B cell (primary cell): ENCODE measurements at regions of chr6 and their contacts with region 1.

Region 1: GRCh38 chr6:11172501-11173332 is 59.8 kb downstream of the NEDD9 start:
- DNase-seq: peak; percentile 82
- ATAC-seq: peak; percentile 68
- H3K4me3 ChIP-seq: peak overlapping the region in 3 of 5 experiments; percentile 5 to 44 (median 25)
- H3K4me3 Mint-ChIP-seq: peak overlapping the region; percentile 64
- H3K27ac ChIP-seq: no peak overlapping the region
- H3K27ac Mint-ChIP-seq: no peak overlapping the region
- H3K4me1 ChIP-seq: peaks cover 7 to 9% of the 10 kb centered on the region in 2 donors
- H3K4me1 Mint-ChIP-seq: peaks cover 9% of the 10 kb centered on the region
- H3K27me3 ChIP-seq: no peaks in the 10 kb centered on the region
- H3K27me3 Mint-ChIP-seq: no peaks in the 10 kb centered on the region
- CTCF ChIP-seq: peak; percentile 90

Region 2: DNA sequence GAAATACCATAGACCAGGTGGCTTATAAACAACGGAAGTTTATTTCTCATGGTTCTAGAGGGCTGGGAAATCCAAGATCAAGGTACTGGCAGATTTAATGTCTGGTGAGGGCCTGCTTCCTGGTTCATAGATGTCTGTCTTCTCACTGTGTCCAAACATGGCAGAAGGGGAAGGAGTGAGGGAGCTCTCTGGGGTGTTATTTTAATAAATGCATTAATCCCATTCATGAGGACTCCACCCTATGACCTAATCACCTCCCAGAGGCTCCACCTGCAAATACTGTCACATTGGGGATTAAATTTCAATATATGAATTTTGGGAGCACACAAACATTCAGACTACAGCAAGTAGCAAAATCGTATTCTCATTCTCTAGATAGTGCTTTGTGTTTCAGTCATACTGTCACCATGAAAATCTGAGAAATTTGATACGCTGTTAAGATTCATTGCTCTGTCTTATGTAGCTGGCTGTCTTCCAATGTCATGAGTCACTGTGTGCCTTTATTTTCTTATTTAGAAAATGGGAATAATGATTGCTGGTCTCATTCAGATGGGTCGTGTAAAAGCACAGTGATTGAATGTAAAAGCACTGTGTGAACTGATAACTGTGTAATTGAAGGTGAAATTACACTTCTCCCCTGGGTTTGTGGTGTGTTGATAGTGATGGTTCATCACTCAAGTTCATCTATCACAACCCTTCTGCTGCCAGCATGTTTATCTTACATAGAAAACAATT is 52.3 kb before region 1 on chr6:
- CTCF ChIA-PET with region 1: no interaction called
- POLR2A ChIA-PET with region 1: no interaction called
- intact Hi-C with region 1: no loop called
- DNase-seq: no peak
- ATAC-seq: no peak
- H3K4me3 ChIP-seq: no peak overlapping the region
- H3K4me3 Mint-ChIP-seq: no peak overlapping the region
- H3K27ac ChIP-seq: no peak overlapping the region
- H3K27ac Mint-ChIP-seq: no peak overlapping the region
- H3K4me1 ChIP-seq: no peaks in the 10 kb centered on the region
- H3K4me1 Mint-ChIP-seq: peaks cover 7% of the 10 kb centered on the region
- H3K27me3 ChIP-seq: no peaks in the 10 kb centered on the region
- H3K27me3 Mint-ChIP-seq: no peaks in the 10 kb centered on the region
- CTCF ChIP-seq: no peak

Region 3: GRCh38 chr6:11144393-11144851 is 28.3 kb before region 1 on chr6:
- CTCF ChIA-PET with region 1: interaction called, 21 read pairs
- POLR2A ChIA-PET with region 1: no interaction called
- intact Hi-C with region 1: loop called (anchors 1 kb)
- DNase-seq: peak; percentile 77
- ATAC-seq: peak; percentile 80
- H3K4me3 ChIP-seq: no peak overlapping the region
- H3K4me3 Mint-ChIP-seq: no peak overlapping the region
- H3K27ac ChIP-seq: no peak overlapping the region
- H3K27ac Mint-ChIP-seq: no peak overlapping the region
- H3K4me1 ChIP-seq: peaks cover 0 to 5% of the 10 kb centered on the region in 2 donors
- H3K4me1 Mint-ChIP-seq: peaks cover 7% of the 10 kb centered on the region
- H3K27me3 ChIP-seq: no peaks in the 10 kb centered on the region
- H3K27me3 Mint-ChIP-seq: no peaks in the 10 kb centered on the region
- CTCF ChIP-seq: peak; percentile 94

Region 4: DNA sequence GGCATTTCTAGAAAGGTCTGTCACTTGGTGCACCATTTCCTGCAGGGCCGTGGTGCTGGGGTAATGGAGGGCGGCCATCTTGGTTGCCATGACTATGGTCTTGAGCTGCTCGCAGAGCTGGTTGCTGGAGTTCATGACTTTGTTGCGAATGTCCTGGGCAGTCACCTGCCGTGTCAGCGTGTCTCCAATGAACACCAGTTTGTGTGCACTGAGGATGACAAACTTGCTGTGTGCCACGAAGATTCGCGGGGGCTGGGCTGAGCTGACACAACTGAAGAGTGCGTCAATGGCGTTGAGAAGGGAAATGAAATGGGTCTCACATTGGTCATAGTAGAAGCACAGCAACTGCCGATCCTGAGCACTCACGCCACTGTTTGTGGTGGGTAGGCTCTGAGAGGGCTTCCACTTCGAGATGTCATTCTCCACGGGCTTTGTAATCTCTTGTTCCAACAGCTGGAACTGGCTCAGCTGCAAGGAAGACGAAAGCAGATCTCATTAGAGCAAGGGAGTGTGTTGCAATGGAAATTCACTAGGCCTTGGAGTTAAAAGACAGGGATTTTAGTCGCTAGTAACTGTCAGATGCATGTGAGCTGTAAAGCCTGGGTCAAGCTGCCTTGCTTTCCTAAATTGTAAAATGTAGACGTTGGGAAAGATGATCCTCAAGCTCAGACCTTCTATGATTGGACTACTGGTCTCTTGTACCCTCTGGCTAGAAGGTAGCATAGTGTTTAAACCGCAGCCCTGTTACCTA is 12.7 kb after region 1 on chr6:
- CTCF ChIA-PET with region 1: interaction called, 19 read pairs
- POLR2A ChIA-PET with region 1: no interaction called
- intact Hi-C with region 1: no loop called
- DNase-seq: no peak
- ATAC-seq: no peak
- H3K4me3 ChIP-seq: no peak overlapping the region
- H3K4me3 Mint-ChIP-seq: no peak overlapping the region
- H3K27ac ChIP-seq: no peak overlapping the region
- H3K27ac Mint-ChIP-seq: peak overlapping the region; percentile 32
- H3K4me1 ChIP-seq: no peaks in the 10 kb centered on the region
- H3K4me1 Mint-ChIP-seq: no peaks in the 10 kb centered on the region
- H3K27me3 ChIP-seq: no peaks in the 10 kb centered on the region
- H3K27me3 Mint-ChIP-seq: no peaks in the 10 kb centered on the region
- CTCF ChIP-seq: no peak

Region 5: GRCh38 chr6:11350294-11350969 is 177.7 kb after region 1 on chr6:
- CTCF ChIA-PET with region 1: no interaction called
- POLR2A ChIA-PET with region 1: no interaction called
- intact Hi-C with region 1: no loop called
- DNase-seq: no peak
- ATAC-seq: no peak
- H3K4me3 ChIP-seq: no peak overlapping the region
- H3K4me3 Mint-ChIP-seq: no peak overlapping the region
- H3K27ac ChIP-seq: peak overlapping the region in 1 of 2 donors; percentile 34
- H3K27ac Mint-ChIP-seq: peak overlapping the region; percentile 21
- H3K4me1 ChIP-seq: peaks cover 42 to 45% of the 10 kb centered on the region in 2 donors
- H3K4me1 Mint-ChIP-seq: peaks cover 91% of the 10 kb centered on the region
- H3K27me3 ChIP-seq: no peaks in the 10 kb centered on the region
- H3K27me3 Mint-ChIP-seq: no peaks in the 10 kb centered on the region
- CTCF ChIP-seq: no peak

Region 6: GRCh38 chr6:11381801-11382513 is 209.2 kb after region 1 on chr6:
- CTCF ChIA-PET with region 1: interaction called, 10 read pairs
- POLR2A ChIA-PET with region 1: no interaction called
- intact Hi-C with region 1: no loop called
- DNase-seq: peak; percentile 91
- ATAC-seq: peak; percentile 92
- H3K4me3 ChIP-seq: peak overlapping the region; percentile 62 to 93 (median 80)
- H3K4me3 Mint-ChIP-seq: peak overlapping the region; percentile 95
- H3K27ac ChIP-seq: peak overlapping the region; percentile 81 to 85
- H3K27ac Mint-ChIP-seq: peak overlapping the region; percentile 88
- H3K4me1 ChIP-seq: peaks cover 64 to 74% of the 10 kb centered on the region in 2 donors
- H3K4me1 Mint-ChIP-seq: peaks cover 83% of the 10 kb centered on the region
- H3K27me3 ChIP-seq: no peaks in the 10 kb centered on the region
- H3K27me3 Mint-ChIP-seq: no peaks in the 10 kb centered on the region
- CTCF ChIP-seq: no peak

Region 7: GRCh38 chr6:11485271-11485670 is 312.6 kb after region 1 on chr6:
- CTCF ChIA-PET with region 1: interaction called, 12 read pairs
- POLR2A ChIA-PET with region 1: no interaction called
- intact Hi-C with region 1: no loop called
- DNase-seq: no peak
- ATAC-seq: no peak
- H3K4me3 ChIP-seq: no peak overlapping the region
- H3K4me3 Mint-ChIP-seq: no peak overlapping the region
- H3K27ac ChIP-seq: no peak overlapping the region
- H3K27ac Mint-ChIP-seq: no peak overlapping the region
- H3K4me1 ChIP-seq: no peaks in the 10 kb centered on the region
- H3K4me1 Mint-ChIP-seq: no peaks in the 10 kb centered on the region
- H3K27me3 ChIP-seq: no peaks in the 10 kb centered on the region
- H3K27me3 Mint-ChIP-seq: no peaks in the 10 kb centered on the region
- CTCF ChIP-seq: no peak